ENCODE measurements at regions of chr10 and their contacts with region 1.

Region 1: DNA sequence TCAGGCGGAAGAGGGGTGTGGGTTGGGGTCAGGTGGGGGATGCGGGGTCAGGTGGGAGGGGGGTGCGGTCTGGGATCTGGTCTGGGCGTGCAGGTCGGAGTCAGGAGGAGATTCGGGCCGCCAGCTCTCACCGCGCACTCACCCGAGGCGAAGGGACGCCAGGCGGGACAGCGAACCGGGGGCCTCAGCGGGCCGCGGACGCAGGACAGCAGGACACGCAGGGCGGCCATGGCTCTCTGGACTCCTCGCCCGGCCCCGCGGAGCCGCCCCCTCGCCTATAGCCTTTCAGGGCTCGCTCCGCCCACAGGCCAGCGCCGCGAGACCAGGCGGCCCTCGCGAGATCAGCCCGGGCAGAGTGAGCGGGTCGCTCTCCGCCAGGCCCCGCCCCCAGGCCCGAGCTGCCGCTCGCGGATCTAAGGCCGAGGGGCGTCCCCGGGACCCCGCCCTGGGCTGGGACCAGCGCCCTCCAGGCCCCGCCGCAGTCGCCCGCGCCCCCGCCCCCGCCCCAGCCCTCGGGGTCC is at the start of gene ECHS1:
- DNase-seq: peak; percentile 79 to 95 (median 92)
- ATAC-seq: peak; percentile 99
- H3K4me3 ChIP-seq: peak within 1 kb of the TSS; percentile 60
- H3K4me3 Mint-ChIP-seq: peak within 1 kb of the TSS; percentile 87
- H3K27ac ChIP-seq: no peak within 1 kb of the TSS
- H3K27ac Mint-ChIP-seq: peak within 1 kb of the TSS; percentile 55
- H3K4me1 ChIP-seq: peaks cover 25% of the 10 kb centered on the region
- H3K4me1 Mint-ChIP-seq: peaks cover 4% of the 10 kb centered on the region
- H3K27me3 ChIP-seq: no peaks in the 10 kb centered on the region
- H3K27me3 Mint-ChIP-seq: no peaks in the 10 kb centered on the region
- CTCF ChIP-seq: no peak
- total RNA-seq, gene ECHS1: 7.6 to 8.3 TPM

Region 2: DNA sequence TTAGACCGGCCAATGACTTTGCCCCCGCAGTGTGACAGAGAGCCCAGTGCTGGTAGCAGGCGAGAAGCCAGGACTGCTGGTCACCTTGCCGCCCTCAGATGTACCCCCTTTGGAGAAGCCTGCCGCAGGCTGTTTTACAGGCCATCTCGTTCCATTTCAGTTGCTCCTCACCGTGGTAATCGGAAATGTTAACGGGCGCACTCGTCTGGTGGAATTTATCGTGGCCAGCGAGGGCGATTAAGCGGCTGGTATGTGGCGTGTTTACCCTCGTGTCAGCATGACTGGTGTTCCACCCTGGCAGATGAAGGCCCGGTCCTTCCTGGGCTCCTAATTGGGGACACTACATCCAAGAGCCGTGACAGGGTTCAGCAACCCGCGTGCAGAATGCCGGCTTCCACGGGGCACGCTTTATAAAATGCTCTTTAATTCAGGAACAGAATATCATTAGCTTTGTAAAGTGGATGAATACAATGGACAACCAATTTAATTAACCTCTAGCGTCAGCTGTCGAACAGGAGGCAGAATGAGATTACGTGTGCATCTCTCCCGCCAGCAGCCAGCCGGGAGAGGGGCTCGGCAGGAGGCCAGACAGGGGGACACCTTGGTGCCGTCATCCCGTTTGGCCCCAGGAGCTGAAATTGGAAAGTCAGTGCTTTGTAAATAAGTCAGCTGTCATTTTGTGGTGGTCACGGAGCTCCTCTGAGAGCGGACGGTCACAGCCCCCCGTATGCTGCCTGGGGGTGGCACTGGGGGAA is 695.5 kb before region 1 on chr10:
- CTCF ChIA-PET with region 1: no interaction called
- POLR2A ChIA-PET with region 1: no interaction called
- intact Hi-C with region 1: no loop called
- DNase-seq: peak in 1 of 14 experiments; percentile 25
- ATAC-seq: no peak
- H3K4me3 ChIP-seq: no peak overlapping the region
- H3K4me3 Mint-ChIP-seq: no peak overlapping the region
- H3K27ac ChIP-seq: no peak overlapping the region
- H3K27ac Mint-ChIP-seq: no peak overlapping the region
- H3K4me1 ChIP-seq: no peaks in the 10 kb centered on the region
- H3K4me1 Mint-ChIP-seq: peaks cover 18% of the 10 kb centered on the region
- H3K27me3 ChIP-seq: no peaks in the 10 kb centered on the region
- H3K27me3 Mint-ChIP-seq: no peaks in the 10 kb centered on the region
- CTCF ChIP-seq: no peak

Region 3: GRCh38 chr10:133335246-133336117 is 37.7 kb before region 1 on chr10:
- CTCF ChIA-PET with region 1: no interaction called
- POLR2A ChIA-PET with region 1: interaction called, 6 read pairs
- intact Hi-C with region 1: loop called in 1 of 2 experiments (anchors 5 kb)
- DNase-seq: peak; percentile 67 to 96 (median 83)
- ATAC-seq: peak; percentile 56
- H3K4me3 ChIP-seq: peak overlapping the region; percentile 58
- H3K4me3 Mint-ChIP-seq: peak overlapping the region; percentile 81
- H3K27ac ChIP-seq: peak overlapping the region; percentile 53 to 78
- H3K27ac Mint-ChIP-seq: peak overlapping the region; percentile 86
- H3K4me1 ChIP-seq: peaks cover 41% of the 10 kb centered on the region
- H3K4me1 Mint-ChIP-seq: peaks cover 6% of the 10 kb centered on the region
- H3K27me3 ChIP-seq: no peaks in the 10 kb centered on the region
- H3K27me3 Mint-ChIP-seq: peaks cover 12% of the 10 kb centered on the region
- CTCF ChIP-seq: no peak

Region 4: GRCh38 chr10:133351408-133352318 is 21.5 kb before region 1 on chr10:
- CTCF ChIA-PET with region 1: no interaction called
- POLR2A ChIA-PET with region 1: no interaction called
- intact Hi-C with region 1: no loop called
- DNase-seq: no peak
- ATAC-seq: no peak
- H3K4me3 ChIP-seq: no peak overlapping the region
- H3K4me3 Mint-ChIP-seq: no peak overlapping the region
- H3K27ac ChIP-seq: no peak overlapping the region
- H3K27ac Mint-ChIP-seq: no peak overlapping the region
- H3K4me1 ChIP-seq: peaks cover 9% of the 10 kb centered on the region
- H3K4me1 Mint-ChIP-seq: no peaks in the 10 kb centered on the region
- H3K27me3 ChIP-seq: peaks cover 2 to 12% of the 10 kb centered on the region in 2 experiments
- H3K27me3 Mint-ChIP-seq: peaks cover 7% of the 10 kb centered on the region
- CTCF ChIP-seq: no peak

Measured in CD4-positive, alpha-beta T cell (primary cell).